ENCODE measurements at regions of chr1 and their contacts with region 1.

Region 1: DNA sequence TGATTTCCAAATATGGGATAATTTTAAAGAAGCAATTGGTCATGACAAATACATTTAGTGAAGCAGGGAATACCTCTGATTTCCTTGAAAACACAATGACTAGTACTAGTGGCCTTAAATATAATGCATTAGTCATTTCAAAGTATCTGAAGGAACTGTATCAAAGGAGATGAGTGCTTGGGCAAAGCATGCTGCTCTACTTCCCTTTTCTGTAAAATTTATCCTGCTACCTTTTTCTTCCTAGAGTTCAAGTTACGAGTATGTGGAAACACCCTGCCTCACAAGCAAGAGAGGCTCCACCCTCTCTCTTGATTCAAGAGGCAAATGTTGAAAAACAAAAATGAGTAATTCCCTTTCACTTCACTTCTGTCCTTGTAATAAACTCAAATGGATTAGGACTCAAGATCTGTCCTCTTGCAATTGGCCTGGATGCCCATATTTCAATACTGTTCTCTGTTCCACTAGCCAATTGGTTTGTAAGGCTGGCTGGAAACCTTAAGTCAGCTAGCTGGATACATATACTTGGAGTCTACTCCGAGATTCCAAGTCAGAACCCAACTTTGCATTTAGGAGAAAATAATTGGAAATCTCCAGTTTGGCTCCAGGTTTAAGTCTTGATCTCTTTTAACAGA is 92.5 kb downstream of the CDC42BPA start:
- DNase-seq: peak; percentile 72
- H3K4me3 ChIP-seq: peak overlapping the region in 1 of 3 experiments; percentile 36
- H3K27ac ChIP-seq: peak overlapping the region; percentile 73
- H3K4me1 ChIP-seq: peaks cover 38% of the 10 kb centered on the region
- H3K27me3 ChIP-seq: no peaks in the 10 kb centered on the region
- CTCF ChIP-seq: no peak
- POLR2A ChIP-seq: no peak

Region 2: DNA sequence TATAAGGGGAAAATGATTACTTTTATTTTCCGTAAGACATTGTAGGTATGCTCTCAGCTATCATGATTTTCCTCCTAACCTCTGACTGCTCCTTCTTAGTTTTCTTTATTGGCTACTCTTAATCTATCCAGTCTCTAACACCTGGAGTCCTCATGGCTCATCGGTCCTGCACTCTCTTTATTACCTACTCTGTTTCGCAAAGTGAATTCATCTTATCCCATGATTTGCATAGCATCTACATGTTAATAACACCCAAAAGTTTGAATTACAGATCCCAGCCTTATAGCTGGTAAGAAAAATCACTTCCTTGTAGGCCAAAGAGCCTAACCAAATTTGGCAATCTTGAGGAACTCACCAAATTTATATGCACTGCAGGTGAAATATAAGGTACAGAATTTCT is 43.8 kb before region 1 on chr1:
- CTCF ChIA-PET with region 1: no interaction called
- POLR2A ChIA-PET with region 1: no interaction called
- dilution Hi-C with region 1: no loop called
- intact Hi-C with region 1: loop called (anchors 5 kb)
- DNase-seq: no peak
- H3K4me3 ChIP-seq: no peak overlapping the region
- H3K27ac ChIP-seq: no peak overlapping the region
- H3K4me1 ChIP-seq: no peaks in the 10 kb centered on the region
- H3K27me3 ChIP-seq: no peaks in the 10 kb centered on the region
- CTCF ChIP-seq: no peak
- POLR2A ChIP-seq: no peak

Region 3: DNA sequence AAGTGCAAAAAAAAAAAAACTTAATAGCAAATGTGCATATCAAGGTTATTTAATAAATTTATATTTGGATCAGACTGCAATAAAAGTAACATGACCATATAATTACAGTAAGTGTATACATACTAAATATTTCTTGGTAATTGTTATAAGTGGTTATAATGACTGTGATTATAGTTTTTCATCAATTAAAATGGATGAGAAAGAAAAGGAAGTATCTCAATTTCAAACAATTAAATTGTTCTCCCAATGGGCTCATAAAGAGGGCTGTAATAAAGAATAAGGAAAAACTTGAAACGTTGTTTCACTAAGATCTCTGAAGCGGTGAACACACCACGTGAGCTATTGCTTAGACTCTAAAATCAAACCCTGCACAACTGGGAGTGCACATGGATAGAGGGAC is 11.6 kb before region 1 on chr1:
- CTCF ChIA-PET with region 1: interaction called, 4 read pairs
- POLR2A ChIA-PET with region 1: no interaction called
- dilution Hi-C with region 1: no loop called
- intact Hi-C with region 1: loop called (anchors 1 kb)
- DNase-seq: no peak
- H3K4me3 ChIP-seq: no peak overlapping the region
- H3K27ac ChIP-seq: no peak overlapping the region
- H3K4me1 ChIP-seq: peaks cover 16% of the 10 kb centered on the region
- H3K27me3 ChIP-seq: no peaks in the 10 kb centered on the region
- CTCF ChIP-seq: no peak
- POLR2A ChIP-seq: no peak

Measured in endothelial cell of umbilical vein (primary cell).